Panc1 (cell line): ENCODE measurements at regions of chr11 and their contacts with region 1.

Region 1: DNA sequence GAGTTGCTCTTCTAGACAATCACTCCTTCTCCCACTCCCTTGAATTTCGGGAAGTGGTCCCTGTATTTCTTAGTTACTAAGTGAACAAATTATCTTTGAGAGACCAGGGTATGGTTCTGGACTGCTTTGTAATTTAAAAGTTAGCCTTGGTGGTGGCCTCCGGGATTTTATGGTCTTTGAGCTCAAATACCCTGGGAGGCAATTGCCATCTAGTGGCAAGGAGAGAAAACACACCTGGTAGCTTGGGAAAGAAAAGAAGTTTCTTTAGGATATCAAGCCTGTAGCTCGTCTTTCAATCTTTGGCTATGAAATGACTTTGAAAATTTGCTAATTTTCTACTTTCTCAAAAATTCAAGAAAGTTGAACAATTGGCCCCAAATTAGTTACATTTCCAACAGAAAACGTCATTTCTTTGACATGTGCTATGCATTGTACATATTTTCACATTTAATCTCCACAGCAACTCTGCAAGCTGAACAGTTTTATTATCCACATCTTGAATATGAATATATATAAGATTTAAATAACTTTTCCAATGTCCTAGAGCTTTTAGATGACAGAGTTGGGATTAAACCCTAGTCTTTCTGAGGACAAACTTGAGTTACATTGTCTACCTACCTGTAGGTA is 39.1 kb downstream of the MMP27 start:
- DNase-seq: peak; percentile 41
- ATAC-seq: peak; percentile 86
- H3K4me3 ChIP-seq: no peak overlapping the region
- H3K27ac ChIP-seq: peak overlapping the region; percentile 44; the same call in 1 of the 2 replicates
- H3K4me1 ChIP-seq: peaks cover 10% of the 10 kb centered on the region
- H3K27me3 ChIP-seq: no peaks in the 10 kb centered on the region
- CTCF ChIP-seq: peak; percentile 92

Region 2: GRCh38 chr11:102293873-102294601 is 372.4 kb before region 1 on chr11:
- CTCF ChIA-PET with region 1: interaction called, 5 read pairs
- POLR2A ChIA-PET with region 1: no interaction called
- in situ Hi-C with region 1: no loop called
- intact Hi-C with region 1: loop called (anchors 5 kb)
- DNase-seq: peak; percentile 69
- ATAC-seq: peak; percentile 77
- H3K4me3 ChIP-seq: no peak overlapping the region
- H3K27ac ChIP-seq: peak overlapping the region; percentile 95
- H3K4me1 ChIP-seq: peaks cover 48% of the 10 kb centered on the region
- H3K27me3 ChIP-seq: no peaks in the 10 kb centered on the region
- CTCF ChIP-seq: peak; percentile 93

Region 3: DNA sequence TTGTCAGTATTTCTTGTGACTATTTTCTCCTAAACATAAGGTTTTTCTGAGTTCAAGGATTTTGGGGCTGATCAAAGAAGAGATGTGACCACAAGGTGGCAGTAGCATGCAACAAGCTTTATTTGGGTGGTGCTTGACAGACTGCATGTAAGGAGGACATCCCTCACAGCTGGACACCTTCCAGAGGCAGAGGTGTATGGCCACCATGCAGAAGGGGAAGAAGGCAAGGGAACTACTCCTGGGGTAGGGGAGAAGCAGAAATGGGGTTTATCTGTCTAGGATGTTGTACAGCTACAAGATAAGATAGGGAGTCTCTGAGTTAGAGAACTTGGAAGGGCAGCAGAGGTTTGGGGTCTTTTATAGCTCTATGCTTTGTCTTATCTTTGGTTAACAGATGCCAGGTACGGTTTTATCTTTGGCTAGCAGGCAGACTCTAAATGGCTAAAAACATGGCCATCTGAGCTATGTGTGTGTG is 324.6 kb before region 1 on chr11:
- CTCF ChIA-PET with region 1: interaction called, 20 read pairs
- POLR2A ChIA-PET with region 1: no interaction called
- in situ Hi-C with region 1: no loop called
- intact Hi-C with region 1: loop called (anchors 5 kb)
- DNase-seq: no peak
- ATAC-seq: peak; percentile 70
- H3K4me3 ChIP-seq: no peak overlapping the region
- H3K27ac ChIP-seq: peak overlapping the region; percentile 75
- H3K4me1 ChIP-seq: peaks cover 38% of the 10 kb centered on the region
- H3K27me3 ChIP-seq: no peaks in the 10 kb centered on the region
- CTCF ChIP-seq: peak; percentile 91

Region 4: DNA sequence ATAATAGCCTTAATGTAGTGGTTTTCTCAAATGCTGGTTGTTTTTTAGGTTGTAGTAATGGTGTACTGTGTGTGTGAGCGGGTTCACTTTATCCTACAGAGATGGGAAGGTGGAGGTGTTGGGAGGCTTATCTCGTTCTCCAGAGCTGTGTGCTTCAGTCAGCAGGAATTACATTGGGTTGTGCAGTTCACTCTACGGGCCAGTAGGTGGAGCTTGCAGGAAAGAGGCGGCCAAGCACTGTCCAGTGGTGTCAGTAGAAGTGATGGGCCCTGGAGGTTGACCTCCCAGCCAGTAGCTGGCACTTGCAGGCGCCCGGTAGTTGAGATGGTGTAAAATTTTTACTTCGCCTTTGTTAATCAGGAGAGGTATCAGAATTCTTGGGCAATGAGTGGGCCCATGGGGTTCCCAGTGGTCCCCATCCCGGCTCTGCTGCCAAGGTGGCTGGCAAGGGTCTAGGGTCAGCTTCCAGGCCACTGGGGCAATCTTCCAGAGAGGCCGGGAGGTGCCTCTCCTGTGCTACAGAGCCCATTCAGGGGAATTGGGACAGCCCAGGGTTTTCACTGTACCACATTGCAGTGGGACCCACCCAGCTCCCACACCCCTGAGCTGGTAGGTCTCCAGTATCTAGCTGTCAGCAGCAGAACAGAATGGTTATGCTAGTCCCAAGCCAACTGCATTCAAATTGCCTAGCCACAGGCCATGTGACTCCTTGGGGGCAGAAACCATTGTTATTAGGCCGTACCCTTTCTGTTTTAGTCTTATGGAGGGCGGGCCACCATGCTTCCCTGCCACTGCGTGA is 275.6 kb before region 1 on chr11:
- CTCF ChIA-PET with region 1: interaction called, 9 read pairs
- POLR2A ChIA-PET with region 1: no interaction called
- in situ Hi-C with region 1: no loop called
- intact Hi-C with region 1: loop called (anchors 10 kb)
- DNase-seq: peak; percentile 60
- ATAC-seq: peak; percentile 75
- H3K4me3 ChIP-seq: no peak overlapping the region
- H3K27ac ChIP-seq: peak overlapping the region; percentile 8
- H3K4me1 ChIP-seq: peaks cover 21% of the 10 kb centered on the region
- H3K27me3 ChIP-seq: no peaks in the 10 kb centered on the region
- CTCF ChIP-seq: peak; percentile 96

Region 5: GRCh38 chr11:102614485-102614884 is 52.0 kb before region 1 on chr11:
- CTCF ChIA-PET with region 1: interaction called, 17 read pairs
- POLR2A ChIA-PET with region 1: no interaction called
- in situ Hi-C with region 1: no loop called
- intact Hi-C with region 1: loop called (anchors 5 kb)
- DNase-seq: no peak
- ATAC-seq: no peak
- H3K4me3 ChIP-seq: no peak overlapping the region
- H3K27ac ChIP-seq: peak overlapping the region; percentile 80; the same call in 1 of the 2 replicates
- H3K4me1 ChIP-seq: peaks cover 27% of the 10 kb centered on the region
- H3K27me3 ChIP-seq: no peaks in the 10 kb centered on the region
- CTCF ChIP-seq: peak; percentile 64